CD14-positive monocyte (primary cell): ENCODE measurements at regions of chr1 and their contacts with region 1.

Region 1: DNA sequence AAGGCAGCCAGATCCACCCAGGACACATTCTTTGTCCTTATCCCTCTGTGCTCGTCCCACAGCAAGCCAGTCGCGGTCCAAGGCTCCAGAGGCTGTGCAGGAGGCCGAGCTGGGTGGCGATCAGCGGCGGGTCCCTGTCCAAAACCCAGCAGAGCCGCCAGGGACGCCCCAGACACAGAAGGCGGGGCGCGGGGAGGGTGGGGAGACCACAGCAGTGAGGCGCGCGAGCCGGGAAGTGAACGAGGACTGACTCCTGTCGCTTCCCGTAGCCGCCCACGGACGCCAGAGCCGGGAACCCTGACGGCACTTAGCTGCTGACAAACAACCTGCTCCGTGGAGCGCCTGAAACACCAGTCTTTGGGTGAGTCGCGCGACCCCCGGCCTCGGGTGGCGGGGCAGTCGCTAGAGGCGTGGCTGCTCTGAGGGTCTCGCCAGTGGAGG is at the start of gene LGALS8:
- DNase-seq: peak; percentile 77 to 82 (median 81)
- H3K4me3 ChIP-seq: peak within 1 kb of the TSS; percentile 91 to 96 (median 93)
- H3K4me3 Mint-ChIP-seq: peak within 1 kb of the TSS; percentile 92 to 99
- H3K27ac ChIP-seq: peak within 1 kb of the TSS; percentile 98
- H3K27ac Mint-ChIP-seq: peak within 1 kb of the TSS; percentile 96 to 99 (median 97)
- H3K4me1 ChIP-seq: peaks cover 16 to 26% of the 10 kb centered on the region in 2 donors
- H3K4me1 Mint-ChIP-seq: peaks cover 29% of the 10 kb centered on the region
- H3K27me3 ChIP-seq: no peaks in the 10 kb centered on the region
- H3K27me3 Mint-ChIP-seq: no peaks in the 10 kb centered on the region
- CTCF ChIP-seq: no peak
- polyA plus RNA-seq, gene LGALS8: 58.9 to 84.6 (median 75.7) TPM

Region 2: DNA sequence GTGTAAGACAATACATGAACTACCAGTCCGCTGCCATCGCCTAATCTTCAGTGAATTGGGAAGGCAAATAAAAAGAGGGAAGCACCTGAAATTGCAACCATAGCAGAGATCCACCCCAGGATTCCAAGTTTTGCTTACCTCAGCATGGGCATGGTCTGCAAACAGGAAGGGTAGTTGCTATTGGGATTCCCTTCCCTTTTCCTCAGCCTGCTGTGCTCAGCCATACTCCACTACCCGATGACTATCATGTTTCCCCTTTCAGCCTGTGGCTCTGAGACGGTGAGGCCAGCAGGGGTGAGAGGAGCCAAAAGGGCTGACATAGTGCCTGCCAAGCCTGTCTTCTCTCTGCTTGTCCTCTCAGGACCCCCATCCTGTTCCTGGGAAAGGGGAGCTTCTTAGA is 317.2 kb before region 1 on chr1:
- intact Hi-C with region 1: no loop called
- DNase-seq: peak in 1 of 3 donors; percentile 14
- H3K4me3 ChIP-seq: no peak overlapping the region
- H3K4me3 Mint-ChIP-seq: no peak overlapping the region
- H3K27ac ChIP-seq: peak overlapping the region in 1 of 2 donors; percentile 46
- H3K27ac Mint-ChIP-seq: peak overlapping the region in 3 of 7 donors; percentile 11 to 74 (median 12)
- H3K4me1 ChIP-seq: no peaks in the 10 kb centered on the region
- H3K4me1 Mint-ChIP-seq: peaks cover 10% of the 10 kb centered on the region
- H3K27me3 ChIP-seq: no peaks in the 10 kb centered on the region
- H3K27me3 Mint-ChIP-seq: no peaks in the 10 kb centered on the region
- CTCF ChIP-seq: no peak

Region 3: GRCh38 chr1:236281654-236282424 is 241.9 kb before region 1 on chr1 and contains the start of gene ERO1B:
- intact Hi-C with region 1: loop called in 1 of 2 experiments (anchors 10 kb)
- DNase-seq: peak; percentile 93 to 95 (median 94)
- H3K4me3 ChIP-seq: peak within 1 kb of the TSS; percentile 85 to 86 (median 86)
- H3K4me3 Mint-ChIP-seq: peak within 1 kb of the TSS; percentile 96 to 97
- H3K27ac ChIP-seq: peak within 1 kb of the TSS; percentile 8 to 86
- H3K27ac Mint-ChIP-seq: peak within 1 kb of the TSS; percentile 62 to 89 (median 85)
- H3K4me1 ChIP-seq: peaks cover 29 to 35% of the 10 kb centered on the region in 2 donors
- H3K4me1 Mint-ChIP-seq: peaks cover 45% of the 10 kb centered on the region
- H3K27me3 ChIP-seq: no peaks in the 10 kb centered on the region
- H3K27me3 Mint-ChIP-seq: peaks cover 0 to 3% (median 2%) of the 10 kb centered on the region in 3 donors
- CTCF ChIP-seq: no peak
- polyA plus RNA-seq, gene ERO1B: 2.7 to 4.2 (median 3.2) TPM